Dendritic cell treated with granulocyte-macrophage colony-stimulating factor and Interleukin-4, amounts not matched to agents 40 ng/mL and 50 ng/mL, for 4 days (primary cell): ENCODE measurements at regions of chr20 and their contacts with region 1.

Region 1: GRCh38 chr20:35454881-35455609 is at the start of gene CEP250:
- H3K4me3 Mint-ChIP-seq: peak within 1 kb of the TSS; percentile 83
- H3K27ac Mint-ChIP-seq: peak within 1 kb of the TSS; percentile 93
- H3K4me1 Mint-ChIP-seq: peaks cover 24% of the 10 kb centered on the region
- H3K27me3 Mint-ChIP-seq: no peaks in the 10 kb centered on the region

Region 2: GRCh38 chr20:35269055-35269781 is 185.8 kb before region 1 on chr20:
- intact Hi-C with region 1: no loop called
- H3K4me3 Mint-ChIP-seq: no peak overlapping the region
- H3K27ac Mint-ChIP-seq: no peak overlapping the region
- H3K4me1 Mint-ChIP-seq: peaks cover 7% of the 10 kb centered on the region
- H3K27me3 Mint-ChIP-seq: no peaks in the 10 kb centered on the region

Region 3: GRCh38 chr20:35541783-35542588 is 86.9 kb after region 1 on chr20 and contains the start of gene ERGIC3:
- intact Hi-C with region 1: loop called (anchors 2 kb)
- H3K4me3 Mint-ChIP-seq: peak within 1 kb of the TSS; percentile 91
- H3K27ac Mint-ChIP-seq: peak within 1 kb of the TSS; percentile 86
- H3K4me1 Mint-ChIP-seq: peaks cover 5% of the 10 kb centered on the region
- H3K27me3 Mint-ChIP-seq: no peaks in the 10 kb centered on the region

Region 4: DNA sequence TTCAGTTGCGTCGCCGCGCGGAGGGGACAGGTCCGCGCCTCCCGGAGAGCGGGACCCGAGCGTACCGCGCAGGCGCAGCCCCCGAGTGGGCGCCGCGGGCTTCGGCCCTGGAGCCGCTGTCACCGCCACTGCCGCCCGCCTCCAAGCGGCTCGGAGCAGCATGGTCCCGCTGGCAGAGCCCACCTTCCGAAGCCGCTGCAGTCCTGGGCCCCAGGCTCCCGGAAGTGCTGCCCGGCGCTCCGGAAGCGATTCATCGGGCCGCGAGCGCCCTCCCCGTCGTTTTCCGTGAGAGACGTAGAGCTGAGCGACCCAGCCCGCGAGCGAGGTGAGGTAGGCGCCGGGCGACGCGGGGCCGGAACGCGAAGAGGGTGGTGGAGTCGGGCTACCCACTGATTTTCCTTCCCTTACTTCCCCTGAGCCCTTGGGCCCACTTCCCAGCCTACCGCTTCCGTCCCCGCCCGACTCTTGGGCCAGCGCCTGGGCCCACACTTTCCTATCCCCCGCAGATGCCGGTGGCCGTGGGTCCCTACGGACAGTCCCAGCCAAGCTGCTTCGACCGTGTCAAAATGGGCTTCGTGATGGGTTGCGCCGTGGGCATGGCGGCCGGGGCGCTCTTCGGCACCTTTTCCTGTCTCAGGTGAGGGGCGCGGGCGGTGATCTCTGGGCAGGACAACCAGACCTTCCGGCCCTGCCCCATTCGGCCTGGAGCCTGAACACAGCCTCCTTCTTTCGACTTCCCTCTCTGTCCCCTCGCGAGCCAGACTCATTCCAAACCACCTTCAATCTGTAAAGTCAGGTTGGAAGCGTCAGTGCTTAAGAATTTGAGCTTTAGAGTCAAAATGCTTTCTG is 244.3 kb after region 1 on chr20 and contains the starts of genes NFS1 and ROMO1:
- intact Hi-C with region 1: loop called (anchors 10 kb)
- H3K4me3 Mint-ChIP-seq: peak within 1 kb of the TSS; percentile 99
- H3K27ac Mint-ChIP-seq: peak within 1 kb of the TSS; percentile 99
- H3K4me1 Mint-ChIP-seq: peaks cover 37% of the 10 kb centered on the region
- H3K27me3 Mint-ChIP-seq: no peaks in the 10 kb centered on the region